ENCODE measurements at regions of chr2 and their contacts with region 1.

Region 1: GRCh38 chr2:118269408-118270051 is 181.3 kb downstream of the INSIG2 start:
- DNase-seq: no peak
- H3K4me3 ChIP-seq: no peak overlapping the region
- H3K27ac ChIP-seq: no peak overlapping the region
- H3K4me1 ChIP-seq: no peaks in the 10 kb centered on the region
- H3K27me3 ChIP-seq: no peaks in the 10 kb centered on the region
- CTCF ChIP-seq: peak; percentile 30 to 71 (median 58)
- EP300 ChIP-seq: no peak
- POLR2A ChIP-seq: no peak
- RAD21 ChIP-seq: peak; percentile 55 to 67

Region 2: DNA sequence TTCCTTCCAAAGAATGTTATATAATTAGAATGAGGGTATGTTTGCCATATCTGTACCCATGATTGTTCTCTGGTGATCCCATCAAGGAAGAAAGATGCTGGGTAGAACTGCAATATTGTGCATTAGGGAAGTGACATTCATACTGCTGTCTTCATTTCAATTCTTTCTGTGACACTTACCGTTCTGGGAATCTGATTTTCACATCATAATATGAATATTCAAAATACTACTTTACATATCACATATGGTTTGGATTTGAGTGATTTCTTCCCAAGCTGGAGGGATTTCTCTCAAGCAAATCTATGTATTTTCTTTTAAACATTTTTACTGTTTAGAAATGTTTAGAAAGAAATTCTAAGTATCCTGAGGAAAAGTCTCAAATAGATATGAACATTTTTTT is 623.4 kb before region 1 on chr2:
- CTCF ChIA-PET with region 1: no interaction called
- POLR2A ChIA-PET with region 1: no interaction called
- DNase-seq: no peak
- H3K4me3 ChIP-seq: no peak overlapping the region
- H3K27ac ChIP-seq: no peak overlapping the region
- H3K4me1 ChIP-seq: no peaks in the 10 kb centered on the region
- H3K27me3 ChIP-seq: no peaks in the 10 kb centered on the region
- CTCF ChIP-seq: no peak
- EP300 ChIP-seq: no peak
- POLR2A ChIP-seq: no peak
- RAD21 ChIP-seq: no peak

Region 3: DNA sequence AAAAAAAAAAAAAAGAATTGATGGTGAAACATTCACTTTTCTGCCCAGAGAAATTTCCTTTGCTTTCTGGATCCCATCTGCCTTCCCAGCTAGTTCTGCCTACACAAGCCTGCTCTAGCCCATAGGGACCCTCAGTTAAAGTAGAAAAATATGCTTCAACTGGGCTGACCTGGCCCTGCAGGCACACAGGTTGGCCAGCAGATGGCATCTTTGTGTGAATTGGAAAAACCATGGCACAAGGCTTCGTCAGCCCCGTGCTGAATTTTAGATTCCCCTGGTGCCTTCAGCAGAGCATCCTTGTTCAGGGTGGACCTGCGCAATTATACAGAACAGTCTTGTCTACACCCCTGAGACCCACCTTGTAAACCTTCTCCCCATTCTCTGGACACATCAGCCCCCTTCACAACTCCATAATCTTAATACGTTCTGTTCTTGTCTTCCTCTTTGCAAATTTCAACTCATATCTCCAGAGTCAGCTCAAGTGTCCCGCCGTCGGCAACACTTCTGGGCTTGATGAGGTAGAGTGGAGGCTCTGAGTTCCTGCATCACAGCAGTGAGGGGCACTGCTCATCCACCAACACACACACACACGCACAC is 66.7 kb before region 1 on chr2:
- CTCF ChIA-PET with region 1: interaction called, 11 read pairs
- POLR2A ChIA-PET with region 1: no interaction called
- DNase-seq: peak in 1 of 2 experiments; percentile 77
- H3K4me3 ChIP-seq: no peak overlapping the region
- H3K27ac ChIP-seq: no peak overlapping the region
- H3K4me1 ChIP-seq: no peaks in the 10 kb centered on the region
- H3K27me3 ChIP-seq: peaks cover 0 to 3% (median 0%) of the 10 kb centered on the region in 4 experiments; a peak in 1 of 7 replicates
- CTCF ChIP-seq: peak; percentile 82 to 97 (median 88)
- EP300 ChIP-seq: no peak
- POLR2A ChIP-seq: no peak
- RAD21 ChIP-seq: peak; percentile 74 to 84

Region 4: GRCh38 chr2:118221666-118222594 is 47.6 kb before region 1 on chr2:
- CTCF ChIA-PET with region 1: interaction called, 16 read pairs
- POLR2A ChIA-PET with region 1: no interaction called
- DNase-seq: peak in 1 of 2 experiments; percentile 52
- H3K4me3 ChIP-seq: no peak overlapping the region
- H3K27ac ChIP-seq: no peak overlapping the region
- H3K4me1 ChIP-seq: peaks cover 0 to 7% (median 5%) of the 10 kb centered on the region in 4 experiments; a peak in 5 of 7 replicates
- H3K27me3 ChIP-seq: peaks cover 0 to 22% (median 16%) of the 10 kb centered on the region in 4 experiments; a peak in 6 of 7 replicates
- CTCF ChIP-seq: peak in 2 of 3 experiments; percentile 68; a peak in 3 of 4 replicates
- EP300 ChIP-seq: no peak
- POLR2A ChIP-seq: no peak
- RAD21 ChIP-seq: peak; percentile 91 to 94

Region 5: DNA sequence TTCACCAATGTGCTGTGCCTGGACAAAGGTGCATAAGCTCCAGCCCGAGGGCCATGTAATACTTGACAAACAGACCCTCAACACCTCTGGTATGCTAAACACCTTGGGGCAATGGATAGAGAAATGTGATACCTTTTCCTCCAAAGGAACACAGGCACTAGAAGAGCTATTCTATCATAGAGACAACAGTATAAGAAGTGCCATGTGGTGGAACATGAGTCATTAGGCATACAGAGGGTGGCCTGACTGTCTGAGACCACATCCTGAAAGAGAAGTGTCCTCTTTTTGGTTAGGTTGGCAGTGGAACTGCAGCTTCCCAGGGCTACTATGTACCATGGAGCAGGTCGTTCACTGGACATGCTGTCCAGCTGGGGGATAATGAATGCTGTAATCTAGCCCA is 27.3 kb before region 1 on chr2:
- CTCF ChIA-PET with region 1: interaction called, 12 read pairs
- POLR2A ChIA-PET with region 1: no interaction called
- DNase-seq: no peak
- H3K4me3 ChIP-seq: no peak overlapping the region
- H3K27ac ChIP-seq: no peak overlapping the region
- H3K4me1 ChIP-seq: no peaks in the 10 kb centered on the region
- H3K27me3 ChIP-seq: no peaks in the 10 kb centered on the region; a peak in 2 of 7 replicates
- CTCF ChIP-seq: no peak
- EP300 ChIP-seq: no peak
- POLR2A ChIP-seq: no peak
- RAD21 ChIP-seq: no peak

Region 6: GRCh38 chr2:118249531-118249930 is 20.0 kb before region 1 on chr2:
- CTCF ChIA-PET with region 1: interaction called, 13 read pairs
- POLR2A ChIA-PET with region 1: interaction called, 3 read pairs
- DNase-seq: no peak
- H3K4me3 ChIP-seq: no peak overlapping the region
- H3K27ac ChIP-seq: no peak overlapping the region
- H3K4me1 ChIP-seq: peaks cover 0 to 3% (median 0%) of the 10 kb centered on the region in 4 experiments; a peak in 2 of 7 replicates
- H3K27me3 ChIP-seq: no peaks in the 10 kb centered on the region; a peak in 1 of 7 replicates
- CTCF ChIP-seq: no peak
- EP300 ChIP-seq: no peak
- POLR2A ChIP-seq: no peak
- RAD21 ChIP-seq: no peak

Region 7: DNA sequence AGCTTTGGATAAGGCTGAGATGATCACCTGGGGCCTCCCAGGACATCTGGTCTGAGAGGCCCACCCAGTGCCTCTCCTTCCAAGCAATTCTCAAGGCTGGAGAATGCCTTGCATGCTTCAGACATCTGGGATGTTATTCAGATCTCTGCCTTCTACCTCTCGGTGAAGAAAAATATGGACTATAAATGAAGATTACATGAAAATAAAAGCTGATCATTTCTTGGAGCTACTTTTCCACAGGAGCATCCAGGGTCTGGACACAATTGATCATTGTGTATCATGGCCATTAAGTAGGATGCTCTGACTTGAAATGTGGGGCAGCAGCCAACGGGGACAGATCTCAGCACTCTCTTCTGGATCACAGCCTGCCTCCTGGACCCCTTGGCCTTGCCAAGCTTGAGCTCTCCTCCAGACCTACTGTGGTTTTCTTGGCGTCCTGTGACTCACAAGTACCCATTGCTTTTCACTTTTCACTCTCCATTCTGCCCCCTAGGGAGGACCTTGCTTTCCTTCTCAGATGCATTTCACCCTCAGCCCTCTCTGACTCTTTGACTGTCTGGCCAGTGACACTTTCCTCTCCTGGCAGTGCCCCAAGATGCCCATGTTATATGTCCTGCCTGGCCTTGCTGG is 21.8 kb after region 1 on chr2:
- CTCF ChIA-PET with region 1: interaction called, 45 read pairs
- POLR2A ChIA-PET with region 1: no interaction called
- DNase-seq: no peak
- H3K4me3 ChIP-seq: no peak overlapping the region
- H3K27ac ChIP-seq: no peak overlapping the region
- H3K4me1 ChIP-seq: no peaks in the 10 kb centered on the region
- H3K27me3 ChIP-seq: no peaks in the 10 kb centered on the region
- CTCF ChIP-seq: no peak
- EP300 ChIP-seq: no peak
- POLR2A ChIP-seq: no peak
- RAD21 ChIP-seq: no peak

Region 8: DNA sequence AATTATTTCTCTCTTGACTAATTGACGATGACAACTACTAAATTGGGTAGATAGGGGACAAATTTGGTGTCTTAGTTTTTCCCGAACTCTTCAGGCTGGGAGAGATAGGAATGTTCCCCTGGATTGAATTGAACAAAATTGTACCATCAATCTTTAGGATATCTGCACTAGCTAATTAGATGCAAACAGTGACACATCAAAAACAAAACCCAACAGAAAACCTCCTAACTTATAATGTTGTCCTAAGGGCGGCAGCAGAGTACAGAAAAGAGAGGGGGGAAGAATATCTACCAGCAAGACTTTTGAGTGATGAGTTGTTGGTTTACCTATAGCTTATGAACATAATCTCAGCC is 161.6 kb after region 1 on chr2:
- CTCF ChIA-PET with region 1: no interaction called
- POLR2A ChIA-PET with region 1: no interaction called
- DNase-seq: no peak
- H3K4me3 ChIP-seq: no peak overlapping the region
- H3K27ac ChIP-seq: no peak overlapping the region
- H3K4me1 ChIP-seq: peaks cover 0 to 3% (median 0%) of the 10 kb centered on the region in 4 experiments; a peak in 2 of 7 replicates
- H3K27me3 ChIP-seq: no peaks in the 10 kb centered on the region
- CTCF ChIP-seq: peak in 1 of 3 experiments; percentile 12; a peak in 1 of 4 replicates
- EP300 ChIP-seq: no peak
- POLR2A ChIP-seq: no peak
- RAD21 ChIP-seq: peak; percentile 56 to 67